MCF 10A (cell line): ENCODE measurements at regions of chr2 and their contacts with region 1.

Region 1: DNA sequence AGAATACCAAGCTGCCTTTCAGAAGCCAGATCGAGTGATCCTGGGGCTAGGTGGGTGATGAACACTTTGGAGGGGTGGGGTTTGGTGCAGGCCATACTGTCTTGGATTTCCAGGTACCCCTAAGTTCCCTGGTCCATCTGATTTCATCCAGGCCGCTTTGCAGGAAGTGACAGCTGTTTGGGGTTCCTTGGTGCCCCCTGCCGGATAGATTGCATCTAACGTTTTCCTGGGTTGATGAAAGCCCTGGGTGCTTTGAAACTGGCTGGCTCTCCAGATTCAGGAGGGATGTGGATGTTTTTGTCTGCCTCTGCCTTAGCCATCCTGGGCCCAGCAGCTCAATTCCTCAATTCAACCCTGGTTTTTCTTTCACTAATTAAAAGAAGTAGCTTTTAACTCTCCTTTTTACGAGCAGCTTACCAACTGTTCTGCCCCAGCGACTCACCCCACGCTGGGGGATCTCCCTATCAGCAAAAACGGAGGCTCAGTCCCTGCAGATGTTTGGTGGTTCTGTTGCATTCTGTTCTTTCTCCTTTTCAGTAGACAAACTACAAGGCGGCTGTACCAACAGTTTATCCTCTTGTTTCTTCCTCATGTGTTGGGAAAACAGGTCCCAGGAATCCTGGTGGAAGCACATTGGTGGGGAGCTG is 37.1 kb downstream of the ARHGEF4 start:
- DNase-seq: peak; percentile 84
- H3K4me3 Mint-ChIP-seq: no peak overlapping the region
- H3K27ac Mint-ChIP-seq: no peak overlapping the region
- H3K4me1 Mint-ChIP-seq: peaks cover 33% of the 10 kb centered on the region
- H3K27me3 Mint-ChIP-seq: no peaks in the 10 kb centered on the region
- CTCF ChIP-seq: peak; percentile 60

Region 2: GRCh38 chr2:130720036-130720435 is 153.8 kb before region 1 on chr2:
- CTCF ChIA-PET with region 1: no interaction called
- POLR2A ChIA-PET with region 1: no interaction called
- intact Hi-C with region 1: no loop called
- DNase-seq: peak; percentile 75
- H3K4me3 Mint-ChIP-seq: no peak overlapping the region
- H3K27ac Mint-ChIP-seq: no peak overlapping the region
- H3K4me1 Mint-ChIP-seq: no peaks in the 10 kb centered on the region
- H3K27me3 Mint-ChIP-seq: no peaks in the 10 kb centered on the region
- CTCF ChIP-seq: no peak

Region 3: GRCh38 chr2:130797493-130798435 is 76.1 kb before region 1 on chr2:
- CTCF ChIA-PET with region 1: interaction called, 259 read pairs
- POLR2A ChIA-PET with region 1: interaction called, 11 read pairs
- intact Hi-C with region 1: loop called (anchors 1 kb)
- DNase-seq: peak; percentile 91
- H3K4me3 Mint-ChIP-seq: peak overlapping the region; percentile 67
- H3K27ac Mint-ChIP-seq: no peak overlapping the region
- H3K4me1 Mint-ChIP-seq: peaks cover 4% of the 10 kb centered on the region
- H3K27me3 Mint-ChIP-seq: no peaks in the 10 kb centered on the region
- CTCF ChIP-seq: peak; percentile 98

Region 4: GRCh38 chr2:130824492-130825061 is 49.2 kb before region 1 on chr2:
- CTCF ChIA-PET with region 1: interaction called, 21 read pairs
- POLR2A ChIA-PET with region 1: interaction called, 29 read pairs
- intact Hi-C with region 1: loop called (anchors 5 kb)
- DNase-seq: peak; percentile 98
- H3K4me3 Mint-ChIP-seq: peak overlapping the region; percentile 31
- H3K27ac Mint-ChIP-seq: peak overlapping the region; percentile 96
- H3K4me1 Mint-ChIP-seq: peaks cover 60% of the 10 kb centered on the region
- H3K27me3 Mint-ChIP-seq: no peaks in the 10 kb centered on the region
- CTCF ChIP-seq: no peak

Region 5: GRCh38 chr2:130842770-130843169 is 31.1 kb before region 1 on chr2:
- CTCF ChIA-PET with region 1: interaction called, 34 read pairs
- POLR2A ChIA-PET with region 1: interaction called, 17 read pairs
- intact Hi-C with region 1: loop called (anchors 5 kb)
- DNase-seq: no peak
- H3K4me3 Mint-ChIP-seq: no peak overlapping the region
- H3K27ac Mint-ChIP-seq: peak overlapping the region; percentile 57
- H3K4me1 Mint-ChIP-seq: peaks cover 30% of the 10 kb centered on the region
- H3K27me3 Mint-ChIP-seq: no peaks in the 10 kb centered on the region
- CTCF ChIP-seq: no peak

Region 6: DNA sequence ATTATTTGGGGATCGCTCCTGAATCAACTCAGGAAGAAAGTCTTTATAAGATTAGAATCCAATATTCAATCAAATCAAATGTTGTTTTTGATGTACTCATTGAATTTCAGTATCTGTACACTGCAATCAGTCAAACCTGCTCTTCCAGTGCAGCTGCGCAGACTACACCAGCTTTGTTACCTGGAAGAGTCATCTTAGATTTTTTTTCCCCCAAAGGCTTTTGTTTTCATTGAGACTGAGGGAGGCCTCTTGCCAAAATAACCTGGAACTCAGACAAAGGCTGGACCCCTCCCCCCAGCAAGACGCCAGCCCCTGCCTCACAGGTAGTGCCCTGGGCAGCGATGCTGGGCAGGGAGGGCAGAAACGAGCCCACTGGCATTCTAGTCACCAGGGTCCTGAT is 37.7 kb after region 1 on chr2:
- CTCF ChIA-PET with region 1: interaction called, 12 read pairs
- POLR2A ChIA-PET with region 1: interaction called, 4 read pairs
- intact Hi-C with region 1: no loop called
- DNase-seq: peak; percentile 8
- H3K4me3 Mint-ChIP-seq: no peak overlapping the region
- H3K27ac Mint-ChIP-seq: peak overlapping the region; percentile 79
- H3K4me1 Mint-ChIP-seq: peaks cover 37% of the 10 kb centered on the region
- H3K27me3 Mint-ChIP-seq: no peaks in the 10 kb centered on the region
- CTCF ChIP-seq: no peak

Region 7: GRCh38 chr2:131016826-131017741 is 143.3 kb after region 1 on chr2:
- CTCF ChIA-PET with region 1: interaction called, 5 read pairs
- POLR2A ChIA-PET with region 1: interaction called, 6 read pairs
- intact Hi-C with region 1: loop called (anchors 5 kb)
- DNase-seq: peak; percentile 99
- H3K4me3 Mint-ChIP-seq: peak overlapping the region; percentile 71
- H3K27ac Mint-ChIP-seq: peak overlapping the region; percentile 97
- H3K4me1 Mint-ChIP-seq: peaks cover 35% of the 10 kb centered on the region
- H3K27me3 Mint-ChIP-seq: no peaks in the 10 kb centered on the region
- CTCF ChIP-seq: no peak